Calu3 (cell line): ENCODE measurements at regions of chr2 and their contacts with region 1.

Region 1: DNA sequence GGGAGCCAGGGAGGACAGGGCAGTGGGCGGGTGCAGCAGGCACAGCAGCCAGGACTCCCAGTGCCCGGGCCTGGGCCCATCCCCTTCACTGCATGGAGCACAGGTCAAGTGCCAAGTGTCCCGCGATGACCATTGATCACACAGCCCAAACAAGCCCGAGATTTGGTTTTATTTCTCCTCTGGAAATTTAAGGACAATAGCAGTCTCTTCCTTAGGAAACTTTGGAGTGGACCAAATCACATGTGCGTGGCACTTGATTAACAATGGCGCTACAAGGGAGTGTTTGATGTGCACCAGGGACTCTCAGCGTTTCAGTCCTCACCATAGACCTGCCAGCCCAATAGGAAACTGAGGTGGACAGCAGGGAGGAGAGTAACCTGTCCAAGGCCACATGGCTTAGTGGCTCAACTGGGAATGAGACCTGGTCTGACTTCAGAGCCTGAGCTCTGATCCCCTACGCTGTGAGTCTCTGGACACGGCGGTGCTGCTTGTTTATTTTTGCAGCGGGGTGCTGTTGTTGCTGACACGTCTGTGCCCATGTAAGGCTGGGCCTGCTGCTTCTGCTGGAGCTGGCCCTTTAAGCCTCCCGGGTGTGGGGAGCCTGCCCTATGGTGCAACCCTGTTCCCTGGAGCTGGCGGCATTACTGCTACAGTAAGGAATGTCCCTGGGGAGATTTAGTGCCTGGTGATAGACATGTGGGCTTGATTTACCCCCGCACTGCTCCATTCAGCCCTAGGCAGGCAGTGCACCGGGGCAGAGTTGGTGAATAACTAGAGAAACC is 194.2 kb downstream of the INHBB start:
- DNase-seq: peak; percentile 50
- H3K4me3 Mint-ChIP-seq: no peak overlapping the region
- H3K27ac Mint-ChIP-seq: no peak overlapping the region
- H3K4me1 Mint-ChIP-seq: peaks cover 10% of the 10 kb centered on the region
- H3K27me3 Mint-ChIP-seq: peaks cover 75% of the 10 kb centered on the region
- CTCF ChIP-seq: no peak

Region 2: GRCh38 chr2:120520929-120521912 is 18.9 kb before region 1 on chr2:
- CTCF ChIA-PET with region 1: no interaction called
- intact Hi-C with region 1: loop called (anchors 2 kb)
- DNase-seq: peak; percentile 54
- H3K4me3 Mint-ChIP-seq: no peak overlapping the region
- H3K27ac Mint-ChIP-seq: no peak overlapping the region
- H3K4me1 Mint-ChIP-seq: peaks cover 11% of the 10 kb centered on the region
- H3K27me3 Mint-ChIP-seq: peaks cover 91% of the 10 kb centered on the region
- CTCF ChIP-seq: peak; percentile 73